Colonic mucosa (tissue), 4 donors: ENCODE measurements at regions of chrX and their contacts with region 1.

Region 1: GRCh38 chrX:37825209-37825842 is 22.0 kb downstream of the DYNLT3 start:
- DNase-seq: peak; percentile 68
- H3K4me3 ChIP-seq: no peak overlapping the region
- H3K27ac ChIP-seq: no peak overlapping the region
- H3K4me1 ChIP-seq: no peaks in the 10 kb centered on the region
- H3K27me3 ChIP-seq: no peaks in the 10 kb centered on the region
- CTCF ChIP-seq: peak; percentile 89

Region 2: GRCh38 chrX:37509349-37509748 is 316.0 kb before region 1 on chrX:
- intact Hi-C with region 1: loop called (anchors 5 kb)
- DNase-seq: no peak
- H3K4me3 ChIP-seq: no peak overlapping the region
- H3K27ac ChIP-seq: no peak overlapping the region
- H3K4me1 ChIP-seq: no peaks in the 10 kb centered on the region
- H3K27me3 ChIP-seq: no peaks in the 10 kb centered on the region
- CTCF ChIP-seq: no peak

Region 3: GRCh38 chrX:37745354-37745753 is 80.0 kb before region 1 on chrX:
- intact Hi-C with region 1: loop called (anchors 5 kb)
- DNase-seq: peak; percentile 85
- H3K4me3 ChIP-seq: no peak overlapping the region
- H3K27ac ChIP-seq: no peak overlapping the region
- H3K4me1 ChIP-seq: no peaks in the 10 kb centered on the region
- H3K27me3 ChIP-seq: no peaks in the 10 kb centered on the region
- CTCF ChIP-seq: peak; percentile 86

Region 4: DNA sequence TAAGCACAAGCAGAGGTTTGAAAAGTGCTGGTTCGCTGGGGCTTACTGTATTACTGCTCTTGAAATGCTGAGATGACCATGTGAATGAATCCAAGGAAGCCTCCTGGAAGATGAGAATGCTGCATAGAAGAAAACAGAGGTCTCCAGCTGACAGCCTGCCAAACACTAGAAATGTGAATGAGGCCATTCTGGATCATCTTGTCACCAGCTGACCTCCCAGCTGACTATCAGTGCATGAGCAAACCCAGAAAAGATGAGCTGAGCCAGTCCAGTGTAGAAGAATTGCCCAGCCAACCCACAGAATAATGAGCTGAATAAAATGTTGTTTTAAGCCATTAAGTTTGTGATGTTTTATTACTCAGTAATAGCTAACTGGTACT is 71.2 kb after region 1 on chrX:
- intact Hi-C with region 1: no loop called
- DNase-seq: no peak
- H3K4me3 ChIP-seq: no peak overlapping the region
- H3K27ac ChIP-seq: no peak overlapping the region
- H3K4me1 ChIP-seq: no peaks in the 10 kb centered on the region
- H3K27me3 ChIP-seq: no peaks in the 10 kb centered on the region
- CTCF ChIP-seq: no peak